ENCODE measurements at regions of chr1 and their contacts with region 1.

Region 1: GRCh38 chr1:24020025-24020424 is 39.9 kb upstream of the SRSF10 start:
- DNase-seq: no peak
- H3K4me3 ChIP-seq: no peak overlapping the region
- H3K4me3 Mint-ChIP-seq: no peak overlapping the region
- H3K27ac Mint-ChIP-seq: peak overlapping the region; percentile 89
- H3K4me1 ChIP-seq: peaks cover 69% of the 10 kb centered on the region
- H3K4me1 Mint-ChIP-seq: peaks cover 24% of the 10 kb centered on the region
- H3K27me3 ChIP-seq: no peaks in the 10 kb centered on the region
- H3K27me3 Mint-ChIP-seq: no peaks in the 10 kb centered on the region
- CTCF ChIP-seq: no peak

Region 2: GRCh38 chr1:23979878-23980724 is 39.9 kb before region 1 on chr1 and contains the start of gene SRSF10:
- CTCF ChIA-PET with region 1: no interaction called
- POLR2A ChIA-PET with region 1: interaction called, 10 read pairs
- intact Hi-C with region 1: loop called (anchors 2 kb)
- DNase-seq: peak; percentile 95 to 98
- H3K4me3 ChIP-seq: peak within 1 kb of the TSS; percentile 80
- H3K4me3 Mint-ChIP-seq: peak within 1 kb of the TSS; percentile 93
- H3K27ac Mint-ChIP-seq: peak within 1 kb of the TSS; percentile 86
- H3K4me1 ChIP-seq: peaks cover 30% of the 10 kb centered on the region
- H3K4me1 Mint-ChIP-seq: peaks cover 7% of the 10 kb centered on the region
- H3K27me3 ChIP-seq: no peaks in the 10 kb centered on the region
- H3K27me3 Mint-ChIP-seq: no peaks in the 10 kb centered on the region
- CTCF ChIP-seq: peak in 1 of 2 experiments; percentile 14
- total RNA-seq, gene SRSF10: 128 and 133 TPM in 2 replicates

Region 3: GRCh38 chr1:23995431-23995837 is 24.6 kb before region 1 on chr1:
- CTCF ChIA-PET with region 1: no interaction called
- POLR2A ChIA-PET with region 1: interaction called, 12 read pairs
- intact Hi-C with region 1: no loop called
- DNase-seq: no peak
- H3K4me3 ChIP-seq: no peak overlapping the region
- H3K4me3 Mint-ChIP-seq: no peak overlapping the region
- H3K27ac Mint-ChIP-seq: no peak overlapping the region
- H3K4me1 ChIP-seq: no peaks in the 10 kb centered on the region
- H3K4me1 Mint-ChIP-seq: no peaks in the 10 kb centered on the region
- H3K27me3 ChIP-seq: no peaks in the 10 kb centered on the region
- H3K27me3 Mint-ChIP-seq: no peaks in the 10 kb centered on the region
- CTCF ChIP-seq: no peak

Region 4: DNA sequence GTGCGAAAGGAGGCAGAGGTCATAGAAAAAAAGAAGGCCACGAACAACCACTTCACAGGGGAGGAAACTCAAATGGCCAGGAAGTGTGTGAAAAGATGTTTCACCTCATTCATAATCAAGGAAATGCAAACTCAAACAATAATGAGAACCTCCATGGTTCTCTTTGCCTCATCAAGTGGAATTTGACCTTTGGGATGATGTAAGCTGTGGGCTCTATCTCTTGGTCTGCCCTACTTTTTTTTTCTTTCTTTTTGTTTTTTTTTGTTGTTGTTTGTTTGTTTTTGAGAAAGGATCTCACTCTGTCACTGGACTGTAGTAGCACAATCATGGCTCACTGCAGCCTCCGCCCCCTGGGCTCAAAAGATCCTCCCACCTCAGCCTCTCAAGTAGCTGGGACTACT is 243.2 kb after region 1 on chr1:
- CTCF ChIA-PET with region 1: no interaction called
- POLR2A ChIA-PET with region 1: no interaction called
- intact Hi-C with region 1: no loop called
- DNase-seq: no peak
- H3K4me3 ChIP-seq: no peak overlapping the region
- H3K4me3 Mint-ChIP-seq: no peak overlapping the region
- H3K27ac Mint-ChIP-seq: no peak overlapping the region
- H3K4me1 ChIP-seq: no peaks in the 10 kb centered on the region
- H3K4me1 Mint-ChIP-seq: no peaks in the 10 kb centered on the region
- H3K27me3 ChIP-seq: no peaks in the 10 kb centered on the region
- H3K27me3 Mint-ChIP-seq: peaks cover 2% of the 10 kb centered on the region
- CTCF ChIP-seq: no peak